CD4-positive, alpha-beta T cell (primary cell): ENCODE measurements at regions of chr18 and their contacts with region 1.

Region 1: GRCh38 chr18:36095936-36096519 is 28.7 kb upstream of the RPRD1A start:
- DNase-seq: peak in 3 of 14 experiments; percentile 60 to 70 (median 68)
- ATAC-seq: no peak
- H3K4me3 ChIP-seq: no peak overlapping the region
- H3K4me3 Mint-ChIP-seq: no peak overlapping the region
- H3K27ac ChIP-seq: no peak overlapping the region
- H3K27ac Mint-ChIP-seq: no peak overlapping the region
- H3K4me1 ChIP-seq: no peaks in the 10 kb centered on the region
- H3K4me1 Mint-ChIP-seq: no peaks in the 10 kb centered on the region
- H3K27me3 ChIP-seq: no peaks in the 10 kb centered on the region
- H3K27me3 Mint-ChIP-seq: no peaks in the 10 kb centered on the region
- CTCF ChIP-seq: peak; percentile 84

Region 2: DNA sequence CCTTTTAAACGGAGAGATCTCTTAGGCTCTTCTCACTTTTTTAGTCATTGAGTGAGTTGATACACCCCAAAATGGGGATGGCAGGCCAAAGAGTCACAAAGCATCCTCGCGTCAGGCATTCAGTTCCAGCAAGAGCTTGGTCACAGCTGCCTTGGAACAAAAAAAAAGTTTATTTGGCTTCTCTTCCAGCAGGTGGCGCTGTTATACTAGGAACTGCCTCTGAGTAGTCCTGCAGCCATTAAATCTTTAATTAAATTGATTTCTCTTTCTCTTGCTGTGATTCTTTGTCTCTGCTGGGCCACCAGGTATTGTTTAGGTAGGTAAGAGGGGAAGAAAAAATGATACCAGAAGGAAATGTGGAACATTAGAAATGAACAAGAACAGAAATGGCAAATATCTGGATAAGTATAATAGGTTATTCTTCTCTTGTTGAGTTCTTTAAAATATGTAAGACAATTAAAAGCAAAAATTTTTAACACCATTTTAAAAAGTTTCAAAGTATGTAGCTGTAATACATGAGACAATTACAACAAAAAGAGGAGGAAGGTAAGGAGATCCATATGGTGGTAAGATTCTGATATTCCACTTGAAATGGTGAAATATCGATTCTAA is 339.4 kb before region 1 on chr18:
- CTCF ChIA-PET with region 1: no interaction called
- POLR2A ChIA-PET with region 1: no interaction called
- intact Hi-C with region 1: loop called in 1 of 2 experiments (anchors 10 kb)
- DNase-seq: peak in 12 of 14 experiments; percentile 8 to 71 (median 36)
- ATAC-seq: peak; percentile 57
- H3K4me3 ChIP-seq: no peak overlapping the region
- H3K4me3 Mint-ChIP-seq: no peak overlapping the region
- H3K27ac ChIP-seq: no peak overlapping the region
- H3K27ac Mint-ChIP-seq: no peak overlapping the region
- H3K4me1 ChIP-seq: no peaks in the 10 kb centered on the region
- H3K4me1 Mint-ChIP-seq: no peaks in the 10 kb centered on the region
- H3K27me3 ChIP-seq: peaks cover 0 to 4% of the 10 kb centered on the region in 2 experiments
- H3K27me3 Mint-ChIP-seq: peaks cover 33% of the 10 kb centered on the region
- CTCF ChIP-seq: peak; percentile 96

Region 3: DNA sequence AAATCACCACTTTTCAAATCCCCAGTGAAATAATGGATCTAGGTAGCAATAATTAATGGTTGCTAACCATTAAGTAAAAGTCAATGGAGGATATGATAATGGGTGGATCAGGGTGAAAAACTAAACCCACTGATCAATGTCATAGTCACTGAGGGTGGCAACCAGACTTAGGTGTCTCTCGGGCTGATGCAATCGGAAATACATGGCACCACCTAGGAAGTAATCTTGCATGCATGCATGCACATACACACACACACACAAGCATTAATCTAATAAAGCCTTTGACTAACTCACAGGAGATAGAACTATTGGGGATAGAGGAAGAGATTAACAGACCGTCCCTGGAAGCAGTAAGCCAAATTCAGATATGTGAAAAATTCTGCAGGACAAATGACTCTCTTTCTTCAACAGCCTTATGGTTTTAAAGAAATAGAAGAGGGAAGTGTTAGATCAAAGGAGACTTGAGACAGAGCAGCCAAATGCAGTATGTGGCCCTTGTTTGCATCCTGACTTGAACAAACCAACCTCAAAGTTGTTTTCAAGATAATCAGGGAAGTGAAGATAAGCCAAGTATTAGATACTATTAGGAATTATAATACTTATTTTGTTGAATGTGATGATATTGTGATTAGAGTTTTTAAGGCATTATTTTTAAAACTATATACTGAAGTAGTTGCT is 309.5 kb before region 1 on chr18:
- CTCF ChIA-PET with region 1: no interaction called
- POLR2A ChIA-PET with region 1: no interaction called
- intact Hi-C with region 1: no loop called
- DNase-seq: no peak
- ATAC-seq: no peak
- H3K4me3 ChIP-seq: no peak overlapping the region
- H3K4me3 Mint-ChIP-seq: no peak overlapping the region
- H3K27ac ChIP-seq: no peak overlapping the region
- H3K27ac Mint-ChIP-seq: no peak overlapping the region
- H3K4me1 ChIP-seq: no peaks in the 10 kb centered on the region
- H3K4me1 Mint-ChIP-seq: no peaks in the 10 kb centered on the region
- H3K27me3 ChIP-seq: peaks cover 0 to 4% of the 10 kb centered on the region in 2 experiments
- H3K27me3 Mint-ChIP-seq: peaks cover 33% of the 10 kb centered on the region
- CTCF ChIP-seq: no peak

Region 4: GRCh38 chr18:36015629-36016028 is 80.4 kb before region 1 on chr18:
- CTCF ChIA-PET with region 1: interaction called, 7 read pairs
- POLR2A ChIA-PET with region 1: no interaction called
- intact Hi-C with region 1: loop called (anchors 2 to 5 kb)
- DNase-seq: no peak
- ATAC-seq: no peak
- H3K4me3 ChIP-seq: no peak overlapping the region
- H3K4me3 Mint-ChIP-seq: no peak overlapping the region
- H3K27ac ChIP-seq: no peak overlapping the region
- H3K27ac Mint-ChIP-seq: no peak overlapping the region
- H3K4me1 ChIP-seq: no peaks in the 10 kb centered on the region
- H3K4me1 Mint-ChIP-seq: peaks cover 7% of the 10 kb centered on the region
- H3K27me3 ChIP-seq: no peaks in the 10 kb centered on the region
- H3K27me3 Mint-ChIP-seq: no peaks in the 10 kb centered on the region
- CTCF ChIP-seq: no peak

Region 5: GRCh38 chr18:36572135-36572856 is 476.3 kb after region 1 on chr18:
- CTCF ChIA-PET with region 1: no interaction called
- POLR2A ChIA-PET with region 1: no interaction called
- intact Hi-C with region 1: loop called in 1 of 2 experiments (anchors 5 kb)
- DNase-seq: peak in 3 of 14 experiments; percentile 16 to 29 (median 27)
- ATAC-seq: no peak
- H3K4me3 ChIP-seq: no peak overlapping the region
- H3K4me3 Mint-ChIP-seq: peak overlapping the region; percentile 22
- H3K27ac ChIP-seq: no peak overlapping the region
- H3K27ac Mint-ChIP-seq: no peak overlapping the region
- H3K4me1 ChIP-seq: no peaks in the 10 kb centered on the region
- H3K4me1 Mint-ChIP-seq: peaks cover 3% of the 10 kb centered on the region
- H3K27me3 ChIP-seq: no peaks in the 10 kb centered on the region
- H3K27me3 Mint-ChIP-seq: peaks cover 3% of the 10 kb centered on the region
- CTCF ChIP-seq: peak; percentile 29

Region 6: GRCh38 chr18:36809590-36810381 is 713.8 kb after region 1 on chr18:
- CTCF ChIA-PET with region 1: no interaction called
- POLR2A ChIA-PET with region 1: no interaction called
- intact Hi-C with region 1: loop called in 1 of 2 experiments (anchors 5 kb)
- DNase-seq: peak in 12 of 14 experiments; percentile 5 to 79 (median 15)
- ATAC-seq: peak; percentile 98
- H3K4me3 ChIP-seq: no peak overlapping the region
- H3K4me3 Mint-ChIP-seq: no peak overlapping the region
- H3K27ac ChIP-seq: no peak overlapping the region
- H3K27ac Mint-ChIP-seq: no peak overlapping the region
- H3K4me1 ChIP-seq: peaks cover 2% of the 10 kb centered on the region
- H3K4me1 Mint-ChIP-seq: peaks cover 14% of the 10 kb centered on the region
- H3K27me3 ChIP-seq: no peaks in the 10 kb centered on the region
- H3K27me3 Mint-ChIP-seq: no peaks in the 10 kb centered on the region
- CTCF ChIP-seq: peak; percentile 87

Region 7: DNA sequence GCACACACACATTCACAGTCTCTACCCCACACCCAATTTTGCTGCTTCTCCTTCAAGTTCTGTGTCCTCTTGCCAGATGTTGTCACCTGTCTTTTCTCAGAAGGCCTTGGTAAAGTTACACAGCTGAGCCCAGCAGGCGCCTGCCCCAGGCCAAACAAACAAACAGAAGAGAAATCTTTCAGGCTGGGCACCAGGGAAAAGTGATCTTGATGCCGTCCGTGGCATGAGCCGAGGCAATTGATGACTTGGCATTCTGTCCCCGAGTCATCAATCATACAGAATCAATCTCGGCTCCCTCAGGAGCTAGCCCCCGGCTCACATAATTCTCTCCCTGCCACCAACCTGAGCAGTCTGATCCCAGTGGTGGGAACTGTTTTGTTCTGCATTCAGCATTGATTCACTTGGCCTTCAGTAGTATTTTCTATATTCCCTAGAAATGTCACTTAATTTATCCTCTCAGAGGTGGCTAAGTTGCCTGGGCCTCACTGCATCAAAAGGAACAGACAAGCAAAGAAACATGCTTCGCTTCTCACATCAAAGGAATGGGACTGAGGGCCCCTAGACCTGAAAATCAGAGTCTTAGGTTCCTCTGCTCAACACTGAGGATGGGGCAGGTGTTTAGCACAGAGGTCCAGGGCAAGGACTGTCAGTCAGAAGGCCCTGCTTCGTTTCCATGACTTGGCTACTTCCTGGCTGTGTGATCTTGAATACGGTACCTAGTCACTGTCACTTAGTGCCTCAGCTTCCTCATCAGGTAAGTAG is 1748.4 kb after region 1 on chr18:
- CTCF ChIA-PET with region 1: no interaction called
- POLR2A ChIA-PET with region 1: no interaction called
- intact Hi-C with region 1: no loop called
- DNase-seq: no peak
- ATAC-seq: no peak
- H3K4me3 ChIP-seq: no peak overlapping the region
- H3K4me3 Mint-ChIP-seq: no peak overlapping the region
- H3K27ac ChIP-seq: no peak overlapping the region
- H3K27ac Mint-ChIP-seq: no peak overlapping the region
- H3K4me1 ChIP-seq: no peaks in the 10 kb centered on the region
- H3K4me1 Mint-ChIP-seq: no peaks in the 10 kb centered on the region
- H3K27me3 ChIP-seq: no peaks in the 10 kb centered on the region
- H3K27me3 Mint-ChIP-seq: no peaks in the 10 kb centered on the region
- CTCF ChIP-seq: no peak